ENCODE measurements at regions of chr15 and their contacts with region 1.

Region 1: GRCh38 chr15:77543159-77543882 is 89.4 kb downstream of the LINGO1 start:
- DNase-seq: peak; percentile 32
- ATAC-seq: peak; percentile 96
- H3K4me3 ChIP-seq: peak overlapping the region; percentile 73
- H3K27ac ChIP-seq: peak overlapping the region; percentile 52; the same call in 1 of the 2 replicates
- H3K4me1 ChIP-seq: peaks cover 17% of the 10 kb centered on the region
- H3K27me3 ChIP-seq: no peaks in the 10 kb centered on the region
- CTCF ChIP-seq: peak; percentile 89 to 99 (median 93)
- EP300 ChIP-seq: no peak
- POLR2A ChIP-seq: peak; percentile 50; the same call in 1 of the 2 replicates
- RAD21 ChIP-seq: peak; percentile 98

Region 2: DNA sequence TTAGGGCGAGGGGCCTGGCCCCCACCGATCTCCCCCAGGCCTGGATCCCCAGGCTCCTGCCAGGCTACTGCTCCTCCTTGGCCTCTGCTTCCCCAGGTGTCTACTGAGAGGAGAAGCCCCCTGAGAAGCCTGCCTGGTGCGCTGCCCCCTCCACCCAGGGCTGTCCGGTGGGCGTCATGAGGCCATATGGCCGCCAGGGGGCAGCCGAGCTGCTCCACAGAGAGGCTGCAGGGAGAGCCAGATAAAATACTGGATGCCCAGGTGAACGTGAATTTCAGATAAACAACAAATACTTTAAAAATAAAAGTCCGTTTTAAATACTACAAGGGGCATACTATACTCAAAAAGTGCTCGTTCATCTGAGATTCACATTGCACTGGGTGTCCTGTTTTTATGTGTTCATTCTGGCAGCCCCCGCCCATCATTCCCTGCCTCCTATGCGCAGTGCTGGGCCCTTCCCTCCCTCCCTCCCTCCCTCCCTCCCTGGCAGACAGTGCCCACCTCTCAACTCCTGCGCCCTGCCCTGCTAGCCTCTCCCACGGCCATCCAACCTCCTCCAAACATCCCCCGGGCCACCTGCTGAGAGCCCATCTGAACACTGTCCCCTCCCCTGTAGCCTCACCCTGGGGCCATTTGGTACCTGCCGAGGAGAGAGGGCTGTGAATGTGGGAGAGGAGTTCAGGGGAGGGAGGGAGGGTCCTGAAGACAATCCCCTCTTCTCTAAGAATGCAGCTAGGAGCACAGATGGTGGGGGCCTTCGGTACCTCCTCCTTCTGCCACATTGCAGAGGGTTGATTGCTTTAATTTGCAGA is 518.8 kb before region 1 on chr15:
- CTCF ChIA-PET with region 1: interaction called, 18 read pairs
- POLR2A ChIA-PET with region 1: no interaction called
- RAD21 ChIA-PET with region 1: interaction called, 7 read pairs
- SMC1A ChIA-PET with region 1: interaction called, 3 read pairs
- in situ Hi-C with region 1: no loop called
- intact Hi-C with region 1: no loop called
- DNase-seq: no peak
- ATAC-seq: peak; percentile 66
- H3K4me3 ChIP-seq: no peak overlapping the region
- H3K27ac ChIP-seq: no peak overlapping the region
- H3K4me1 ChIP-seq: peaks cover 33% of the 10 kb centered on the region
- H3K27me3 ChIP-seq: no peaks in the 10 kb centered on the region
- CTCF ChIP-seq: peak; percentile 75 to 93 (median 83)
- EP300 ChIP-seq: no peak
- POLR2A ChIP-seq: no peak
- RAD21 ChIP-seq: peak; percentile 83

Region 3: DNA sequence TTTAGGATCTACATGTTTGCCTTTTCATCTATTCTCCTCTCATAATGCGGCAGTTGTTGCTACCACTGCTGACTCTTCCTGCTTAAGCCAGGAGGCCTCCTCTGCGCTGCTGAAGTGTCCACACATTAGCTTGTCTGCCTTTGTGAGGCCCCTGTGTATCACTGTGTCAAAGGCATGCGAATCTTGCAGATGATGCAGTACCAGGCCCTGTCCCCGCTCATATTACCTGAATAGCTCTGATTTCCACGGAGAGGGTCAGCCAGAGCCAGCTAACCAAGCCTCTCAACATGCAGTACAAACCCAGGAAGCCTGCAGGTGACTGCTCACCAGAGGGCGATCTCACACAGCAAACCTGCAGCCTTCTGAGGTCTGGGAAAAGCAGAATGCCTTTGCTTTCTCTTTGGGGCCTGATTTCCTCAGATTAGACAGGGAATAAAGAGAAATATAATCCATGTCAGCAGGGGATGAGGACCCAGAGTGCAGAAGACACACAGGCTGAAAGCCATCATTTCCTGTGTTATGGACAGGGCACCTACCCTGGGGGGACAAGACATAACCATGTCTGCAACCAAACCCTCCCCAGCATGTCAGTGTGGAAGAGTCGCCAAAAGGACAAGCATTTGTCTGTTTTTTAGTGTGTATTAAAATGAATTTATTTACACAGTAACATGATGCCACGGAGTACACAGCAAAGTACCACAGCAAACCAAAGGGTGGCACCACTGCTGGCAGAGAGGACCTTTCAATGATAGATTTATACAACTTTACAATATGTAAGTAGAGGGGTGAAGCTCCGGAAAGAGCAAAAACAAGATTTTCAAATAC is 435.6 kb before region 1 on chr15:
- CTCF ChIA-PET with region 1: interaction called, 63 read pairs
- POLR2A ChIA-PET with region 1: no interaction called
- RAD21 ChIA-PET with region 1: interaction called, 44 read pairs
- SMC1A ChIA-PET with region 1: interaction called, 19 read pairs
- in situ Hi-C with region 1: no loop called
- intact Hi-C with region 1: no loop called
- DNase-seq: no peak
- ATAC-seq: peak; percentile 82
- H3K4me3 ChIP-seq: no peak overlapping the region
- H3K27ac ChIP-seq: no peak overlapping the region
- H3K4me1 ChIP-seq: no peaks in the 10 kb centered on the region
- H3K27me3 ChIP-seq: no peaks in the 10 kb centered on the region
- CTCF ChIP-seq: peak; percentile 61 to 76 (median 69)
- EP300 ChIP-seq: no peak
- POLR2A ChIP-seq: no peak
- RAD21 ChIP-seq: peak; percentile 78

Region 4: GRCh38 chr15:77118882-77119321 is 424.4 kb before region 1 on chr15:
- CTCF ChIA-PET with region 1: interaction called, 155 read pairs
- POLR2A ChIA-PET with region 1: no interaction called
- RAD21 ChIA-PET with region 1: interaction called, 87 read pairs
- SMC1A ChIA-PET with region 1: interaction called, 102 read pairs
- in situ Hi-C with region 1: loop called (anchors 5 kb)
- intact Hi-C with region 1: loop called (anchors 1 kb)
- DNase-seq: peak; percentile 32
- ATAC-seq: peak; percentile 81
- H3K4me3 ChIP-seq: no peak overlapping the region
- H3K27ac ChIP-seq: no peak overlapping the region
- H3K4me1 ChIP-seq: peaks cover 12% of the 10 kb centered on the region; the same call in 1 of the 2 replicates
- H3K27me3 ChIP-seq: no peaks in the 10 kb centered on the region
- CTCF ChIP-seq: peak; percentile 65 to 76 (median 71)
- EP300 ChIP-seq: no peak
- POLR2A ChIP-seq: no peak
- RAD21 ChIP-seq: peak; percentile 86

Region 5: GRCh38 chr15:77160562-77161478 is 382.5 kb before region 1 on chr15:
- CTCF ChIA-PET with region 1: interaction called, 7 read pairs
- POLR2A ChIA-PET with region 1: no interaction called
- RAD21 ChIA-PET with region 1: interaction called, 11 read pairs
- SMC1A ChIA-PET with region 1: interaction called, 4 read pairs
- in situ Hi-C with region 1: no loop called
- intact Hi-C with region 1: no loop called
- DNase-seq: no peak
- ATAC-seq: peak; percentile 50
- H3K4me3 ChIP-seq: no peak overlapping the region
- H3K27ac ChIP-seq: no peak overlapping the region
- H3K4me1 ChIP-seq: no peaks in the 10 kb centered on the region
- H3K27me3 ChIP-seq: no peaks in the 10 kb centered on the region
- CTCF ChIP-seq: no peak
- EP300 ChIP-seq: no peak
- POLR2A ChIP-seq: no peak
- RAD21 ChIP-seq: no peak

Region 6: DNA sequence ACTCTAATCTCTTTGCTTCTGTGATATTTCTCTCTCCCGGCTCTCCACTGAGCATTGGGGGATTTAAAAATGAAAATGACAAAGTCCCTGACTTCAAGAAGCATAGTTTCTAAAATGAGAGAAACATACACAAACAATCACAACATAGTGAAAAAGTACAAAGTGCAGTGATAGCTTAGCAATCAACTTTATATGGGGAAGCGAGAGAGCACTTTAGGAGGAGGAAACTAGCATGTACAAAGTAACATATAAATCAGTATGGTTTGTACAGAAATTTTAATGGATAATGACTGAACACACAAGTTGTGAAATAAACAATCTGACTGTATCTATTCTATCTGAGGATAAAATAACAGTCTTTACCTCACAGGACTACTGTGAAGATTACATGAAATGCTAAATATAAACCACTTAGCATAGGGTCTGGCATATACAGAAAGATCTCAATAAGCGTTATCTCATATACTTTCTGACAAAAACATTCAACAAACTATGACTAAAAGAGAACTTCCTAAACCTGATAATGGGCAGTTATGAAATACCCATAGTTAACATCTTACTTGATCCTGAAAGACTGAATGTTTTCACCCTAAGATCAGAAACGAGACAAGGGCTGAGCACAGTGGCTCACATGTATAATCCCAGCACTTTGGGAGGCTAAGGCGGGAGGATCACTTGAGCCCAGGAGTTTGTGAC is 184.6 kb before region 1 on chr15:
- CTCF ChIA-PET with region 1: no interaction called
- POLR2A ChIA-PET with region 1: no interaction called
- RAD21 ChIA-PET with region 1: no interaction called
- SMC1A ChIA-PET with region 1: no interaction called
- in situ Hi-C with region 1: no loop called
- intact Hi-C with region 1: no loop called
- DNase-seq: no peak
- ATAC-seq: no peak
- H3K4me3 ChIP-seq: no peak overlapping the region
- H3K27ac ChIP-seq: no peak overlapping the region
- H3K4me1 ChIP-seq: no peaks in the 10 kb centered on the region
- H3K27me3 ChIP-seq: no peaks in the 10 kb centered on the region
- CTCF ChIP-seq: no peak
- EP300 ChIP-seq: no peak
- POLR2A ChIP-seq: no peak
- RAD21 ChIP-seq: no peak

Region 7: DNA sequence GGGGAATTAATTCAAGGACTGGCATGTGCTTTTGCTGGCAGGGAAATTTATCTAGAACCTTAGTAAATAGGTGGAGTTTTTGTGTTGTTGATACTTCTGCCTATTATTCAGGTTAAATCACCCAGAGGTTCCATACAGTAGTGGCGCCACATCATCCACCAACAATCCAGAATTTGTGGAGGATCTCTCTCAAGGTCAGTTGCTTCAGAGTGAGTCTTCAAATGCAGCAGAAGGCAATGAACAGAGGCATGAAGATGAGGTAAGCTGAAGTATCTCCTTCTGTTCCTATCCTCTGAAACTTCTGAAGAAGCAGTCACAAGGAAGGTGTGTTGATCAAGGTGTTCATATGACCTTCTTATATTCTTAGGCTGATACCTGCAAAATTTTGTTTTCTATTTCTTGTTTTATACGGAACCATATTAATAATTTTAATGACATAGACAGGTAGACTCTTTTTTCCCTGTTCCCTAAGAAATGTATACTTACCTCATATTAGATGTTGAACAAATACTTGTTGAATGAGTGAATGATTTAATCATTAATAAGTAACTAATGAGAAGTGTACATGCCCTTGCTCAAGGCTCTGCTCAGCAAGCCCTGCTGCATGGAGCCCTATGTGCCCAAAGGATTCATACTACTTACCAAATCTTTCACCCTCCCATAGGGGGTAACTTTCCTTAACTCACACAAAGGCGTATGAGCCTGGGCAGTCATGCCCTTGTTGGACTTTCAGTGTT is 79.0 kb before region 1 on chr15:
- CTCF ChIA-PET with region 1: no interaction called
- POLR2A ChIA-PET with region 1: no interaction called
- RAD21 ChIA-PET with region 1: no interaction called
- SMC1A ChIA-PET with region 1: no interaction called
- in situ Hi-C with region 1: no loop called
- intact Hi-C with region 1: no loop called
- DNase-seq: no peak
- ATAC-seq: no peak
- H3K4me3 ChIP-seq: no peak overlapping the region
- H3K27ac ChIP-seq: no peak overlapping the region
- H3K4me1 ChIP-seq: no peaks in the 10 kb centered on the region
- H3K27me3 ChIP-seq: no peaks in the 10 kb centered on the region
- CTCF ChIP-seq: no peak
- EP300 ChIP-seq: no peak
- POLR2A ChIP-seq: no peak
- RAD21 ChIP-seq: no peak

Region 8: DNA sequence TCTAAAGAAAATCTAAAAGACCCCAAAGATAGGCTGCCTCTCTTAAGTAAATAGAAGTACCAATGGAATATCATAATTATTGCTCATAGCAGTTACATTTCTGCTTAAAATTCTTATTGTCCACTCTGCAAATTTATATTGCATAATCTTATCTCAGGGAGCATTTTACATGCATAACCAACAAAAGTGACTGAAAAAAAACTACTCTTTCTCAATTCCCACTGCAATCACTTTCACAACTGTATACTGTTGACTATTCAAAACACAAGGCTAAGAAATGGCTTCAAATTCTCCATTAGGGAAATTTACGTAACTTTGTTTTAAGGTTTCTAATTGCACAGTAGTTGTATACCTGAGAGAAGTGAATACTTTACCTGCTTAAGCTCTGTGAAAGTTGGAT is 66.3 kb before region 1 on chr15:
- CTCF ChIA-PET with region 1: interaction called, 10 read pairs
- POLR2A ChIA-PET with region 1: no interaction called
- RAD21 ChIA-PET with region 1: no interaction called
- SMC1A ChIA-PET with region 1: no interaction called
- in situ Hi-C with region 1: no loop called
- intact Hi-C with region 1: no loop called
- DNase-seq: no peak
- ATAC-seq: no peak
- H3K4me3 ChIP-seq: no peak overlapping the region
- H3K27ac ChIP-seq: no peak overlapping the region
- H3K4me1 ChIP-seq: no peaks in the 10 kb centered on the region; the same call in 1 of the 2 replicates
- H3K27me3 ChIP-seq: no peaks in the 10 kb centered on the region
- CTCF ChIP-seq: no peak
- EP300 ChIP-seq: no peak
- POLR2A ChIP-seq: no peak
- RAD21 ChIP-seq: no peak

Region 9: DNA sequence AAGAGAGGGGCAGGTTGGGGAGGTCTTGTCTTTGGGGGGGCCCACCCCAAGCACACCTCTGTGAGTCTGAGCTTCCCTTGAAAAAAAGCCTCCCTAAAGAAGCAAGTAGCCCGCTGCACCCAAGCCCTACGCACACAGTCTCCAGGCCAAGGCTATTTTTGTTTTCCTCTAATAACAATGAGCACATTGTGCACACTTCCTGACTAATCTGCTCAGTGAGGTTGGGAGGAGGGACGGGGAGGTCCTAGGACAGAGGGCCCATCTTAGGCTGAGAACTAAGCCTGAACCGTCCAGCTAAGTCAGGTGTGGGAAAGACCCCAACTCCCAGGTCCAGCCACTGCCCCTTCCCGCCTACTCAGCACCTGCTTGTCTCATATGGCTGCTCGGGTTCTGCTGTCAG is 35.4 kb before region 1 on chr15:
- CTCF ChIA-PET with region 1: interaction called, 18 read pairs
- POLR2A ChIA-PET with region 1: interaction called, 4 read pairs
- RAD21 ChIA-PET with region 1: interaction called, 9 read pairs
- SMC1A ChIA-PET with region 1: interaction called, 7 read pairs
- in situ Hi-C with region 1: no loop called
- intact Hi-C with region 1: no loop called
- DNase-seq: no peak
- ATAC-seq: peak; percentile 54
- H3K4me3 ChIP-seq: no peak overlapping the region
- H3K27ac ChIP-seq: no peak overlapping the region
- H3K4me1 ChIP-seq: peaks cover 22% of the 10 kb centered on the region
- H3K27me3 ChIP-seq: no peaks in the 10 kb centered on the region
- CTCF ChIP-seq: no peak
- EP300 ChIP-seq: no peak
- POLR2A ChIP-seq: no peak
- RAD21 ChIP-seq: no peak